Endothelial cell of umbilical vein (primary cell): ENCODE measurements at regions of chr1 and their contacts with region 1.

Region 1: DNA sequence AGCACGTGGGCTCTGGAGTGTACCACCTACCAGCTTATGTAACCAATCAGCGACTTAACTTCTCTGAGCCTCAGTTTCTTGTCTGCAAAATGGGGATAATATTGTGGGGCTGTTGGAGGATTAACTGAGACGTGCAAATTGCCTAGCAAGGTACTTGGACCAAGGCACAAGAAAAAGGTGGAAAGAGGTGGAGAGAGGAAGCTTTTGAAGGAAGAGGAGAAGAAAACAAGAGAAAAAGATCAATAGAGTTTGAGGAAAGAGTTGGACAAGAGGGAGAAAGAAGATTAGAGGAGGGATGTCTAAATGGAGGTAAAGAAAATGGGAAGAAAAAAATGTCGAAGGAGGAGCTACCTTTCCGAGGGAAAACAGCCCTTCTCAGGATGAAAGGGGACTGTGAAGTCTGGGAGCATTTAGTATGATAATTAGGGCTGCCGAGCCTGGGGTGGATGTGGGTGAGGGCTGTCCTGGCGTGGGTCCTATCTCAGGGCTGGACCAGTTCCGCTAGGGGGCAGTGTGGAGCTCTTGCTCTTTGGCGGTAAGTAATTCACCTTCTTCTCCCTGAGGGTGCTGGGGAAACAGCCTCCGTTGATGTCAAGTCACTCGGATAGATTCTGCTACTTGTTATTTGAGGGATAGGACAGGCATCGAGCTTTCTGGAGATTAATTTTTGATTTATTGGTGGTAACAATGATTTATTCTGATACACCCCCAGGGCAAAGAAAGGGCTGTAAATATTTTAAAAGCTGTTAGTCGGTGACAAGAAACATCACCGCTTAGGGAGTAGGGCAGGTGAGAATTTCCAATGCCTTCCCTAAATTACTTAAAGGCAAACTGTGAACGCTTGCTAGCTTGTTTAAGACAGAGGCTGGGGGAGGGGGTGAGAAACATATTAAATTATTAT is 79.0 kb upstream of the NFASC start:
- DNase-seq: peak; percentile 46
- H3K4me3 ChIP-seq: no peak overlapping the region
- H3K27ac ChIP-seq: no peak overlapping the region
- H3K4me1 ChIP-seq: no peaks in the 10 kb centered on the region
- H3K27me3 ChIP-seq: peaks cover 3 to 4% of the 10 kb centered on the region in 2 experiments
- CTCF ChIP-seq: peak; percentile 83 to 88
- POLR2A ChIP-seq: no peak

Region 2: DNA sequence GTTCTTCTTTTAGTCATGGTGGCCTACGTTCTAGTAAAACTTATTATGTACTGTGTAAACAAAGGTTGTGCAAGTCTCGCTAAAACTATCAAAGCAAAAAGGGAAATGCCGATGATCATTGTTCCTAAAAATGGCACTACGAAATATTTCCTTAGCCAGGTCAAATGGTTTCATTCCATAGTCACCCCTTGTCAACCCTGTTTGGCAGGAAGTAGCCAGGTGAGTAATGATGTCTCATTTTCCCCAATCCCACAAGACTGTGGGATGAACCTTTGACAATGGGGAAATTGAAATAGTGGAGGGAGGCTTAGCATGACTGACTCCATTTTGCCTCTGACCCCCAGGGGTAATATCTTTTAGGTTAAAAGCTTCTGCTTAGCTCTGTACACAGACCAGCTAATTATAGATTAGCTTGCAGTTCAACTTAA is 619.9 kb before region 1 on chr1:
- CTCF ChIA-PET with region 1: no interaction called
- POLR2A ChIA-PET with region 1: no interaction called
- dilution Hi-C with region 1: no loop called
- intact Hi-C with region 1: no loop called
- DNase-seq: peak; percentile 73
- H3K4me3 ChIP-seq: no peak overlapping the region
- H3K27ac ChIP-seq: peak overlapping the region; percentile 48
- H3K4me1 ChIP-seq: peaks cover 17% of the 10 kb centered on the region
- H3K27me3 ChIP-seq: no peaks in the 10 kb centered on the region
- CTCF ChIP-seq: no peak
- POLR2A ChIP-seq: no peak

Region 3: DNA sequence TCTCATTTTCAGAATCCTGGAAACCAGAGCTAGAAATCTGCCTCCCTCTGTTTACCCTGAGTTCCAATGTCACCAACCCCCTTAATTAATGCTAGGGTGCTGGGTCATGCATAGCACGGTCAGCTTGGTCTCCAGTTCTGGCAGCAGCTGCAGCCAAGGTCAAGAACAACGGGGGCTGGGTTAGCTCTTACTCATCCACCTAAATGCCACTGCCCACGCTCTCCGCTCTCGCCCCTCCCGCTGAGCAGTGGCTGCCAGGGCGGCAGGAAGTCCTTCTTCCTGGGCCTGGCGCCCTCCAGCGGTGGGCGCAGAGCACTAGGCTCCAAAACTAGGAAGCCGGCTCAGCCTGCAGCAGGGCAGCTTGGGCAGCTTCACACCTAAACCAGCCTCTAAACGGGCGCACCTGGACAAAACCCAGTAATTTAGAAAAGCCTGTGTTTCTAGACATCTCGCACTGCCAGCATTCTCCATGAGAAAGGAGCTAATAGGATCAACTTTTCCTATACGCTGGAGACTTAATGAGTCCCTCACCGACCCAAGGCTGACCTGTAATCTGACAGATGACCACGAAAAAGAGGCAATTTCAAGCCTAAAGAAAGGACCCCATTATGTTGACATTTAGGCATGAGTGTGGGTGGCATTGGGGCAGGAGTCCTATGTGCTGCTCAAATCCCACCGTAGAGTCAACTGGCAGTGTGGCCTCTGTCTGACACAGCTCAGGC is 27.8 kb before region 1 on chr1:
- CTCF ChIA-PET with region 1: interaction called, 12 read pairs
- POLR2A ChIA-PET with region 1: no interaction called
- dilution Hi-C with region 1: no loop called
- intact Hi-C with region 1: no loop called
- DNase-seq: peak; percentile 53
- H3K4me3 ChIP-seq: no peak overlapping the region
- H3K27ac ChIP-seq: no peak overlapping the region
- H3K4me1 ChIP-seq: no peaks in the 10 kb centered on the region
- H3K27me3 ChIP-seq: peaks cover 3 to 16% of the 10 kb centered on the region in 2 experiments
- CTCF ChIP-seq: peak; percentile 80 to 87
- POLR2A ChIP-seq: no peak

Region 4: GRCh38 chr1:204812832-204813231 is 21.1 kb after region 1 on chr1:
- CTCF ChIA-PET with region 1: interaction called, 130 read pairs
- POLR2A ChIA-PET with region 1: no interaction called
- dilution Hi-C with region 1: no loop called
- intact Hi-C with region 1: no loop called
- DNase-seq: no peak
- H3K4me3 ChIP-seq: no peak overlapping the region
- H3K27ac ChIP-seq: no peak overlapping the region
- H3K4me1 ChIP-seq: no peaks in the 10 kb centered on the region
- H3K27me3 ChIP-seq: peaks cover 2 to 5% of the 10 kb centered on the region in 2 experiments
- CTCF ChIP-seq: no peak
- POLR2A ChIP-seq: no peak